ENCODE measurements at regions of chr1 and their contacts with region 1.

Region 1: GRCh38 chr1:223123011-223123610 is 19.9 kb downstream of the TLR5 start:
- DNase-seq: no peak

Region 2: DNA sequence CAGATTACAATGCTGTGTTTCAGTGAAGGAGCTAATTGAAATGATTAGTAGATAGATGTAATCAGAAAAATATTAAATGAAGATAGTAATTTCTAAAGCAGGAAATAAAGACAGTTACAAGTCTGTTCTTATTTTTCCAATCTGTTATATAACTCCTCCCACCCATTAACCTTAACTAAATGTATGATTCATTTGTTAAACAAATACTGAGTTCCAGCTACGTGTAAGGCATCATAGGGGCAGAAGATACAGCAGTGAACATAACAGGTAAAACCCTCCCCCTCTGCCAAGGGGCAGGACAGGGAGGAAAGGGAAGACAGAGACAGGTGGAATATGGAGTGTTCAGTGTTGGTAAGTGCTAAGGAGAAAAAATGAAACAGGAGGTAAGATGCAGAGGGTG is 386.1 kb before region 1 on chr1 and contains the start of gene FAM177B:
- intact Hi-C with region 1: loop called (anchors 5 kb)
- DNase-seq: no peak
- total RNA-seq, gene FAM177B: not detected

Region 3: GRCh38 chr1:222897527-222898190 is 225.5 kb before region 1 on chr1:
- intact Hi-C with region 1: no loop called
- DNase-seq: no peak

Region 4: DNA sequence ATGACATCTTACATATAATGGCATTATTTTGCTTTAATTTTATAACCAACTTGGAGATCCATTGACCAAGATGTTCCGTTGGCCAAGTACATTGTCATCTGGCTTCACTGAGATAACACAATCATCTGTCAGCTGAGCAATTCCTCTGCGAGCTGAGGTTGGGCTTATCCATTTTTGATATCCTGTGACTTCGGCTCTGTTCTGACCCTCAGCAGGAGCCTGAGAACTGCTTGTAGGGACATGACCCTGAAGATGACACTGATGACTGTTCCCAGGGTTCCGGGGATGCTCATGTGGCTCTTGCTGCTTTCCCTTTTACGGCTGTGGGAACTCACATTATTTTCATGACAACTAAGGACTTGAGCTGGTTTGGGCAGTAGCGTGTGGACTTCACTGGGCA is 31.2 kb before region 1 on chr1:
- intact Hi-C with region 1: loop called (anchors 2 kb)
- DNase-seq: no peak

Measured in cardiac septum (tissue), 1 donor.